ENCODE measurements at regions of chr3 and their contacts with region 1.

Region 1: GRCh38 chr3:108589146-108589997 is at the starts of genes CIP2A and DZIP3:
- DNase-seq: peak; percentile 90
- ATAC-seq: peak; percentile 87
- H3K4me3 Mint-ChIP-seq: peak within 1 kb of the TSS; percentile 82
- H3K27ac Mint-ChIP-seq: peak within 1 kb of the TSS; percentile 97
- H3K4me1 Mint-ChIP-seq: peaks cover 33% of the 10 kb centered on the region
- H3K27me3 Mint-ChIP-seq: no peaks in the 10 kb centered on the region
- total RNA-seq, gene CIP2A: 47.8 to 58.5 TPM
- total RNA-seq, gene DZIP3: 11.9 to 12.9 TPM

Region 2: GRCh38 chr3:107953722-107954121 is 635.6 kb before region 1 on chr3:
- CTCF ChIA-PET with region 1: no interaction called
- POLR2A ChIA-PET with region 1: no interaction called
- intact Hi-C with region 1: no loop called
- DNase-seq: no peak
- ATAC-seq: no peak
- H3K4me3 Mint-ChIP-seq: no peak overlapping the region
- H3K27ac Mint-ChIP-seq: no peak overlapping the region
- H3K4me1 Mint-ChIP-seq: peaks cover 33% of the 10 kb centered on the region
- H3K27me3 Mint-ChIP-seq: no peaks in the 10 kb centered on the region

Region 3: GRCh38 chr3:108124337-108125152 is 464.8 kb before region 1 on chr3:
- CTCF ChIA-PET with region 1: no interaction called
- POLR2A ChIA-PET with region 1: no interaction called
- intact Hi-C with region 1: loop called in 1 of 2 experiments (anchors 2 kb)
- DNase-seq: peak; percentile 82
- ATAC-seq: peak; percentile 70
- H3K4me3 Mint-ChIP-seq: peak overlapping the region; percentile 93
- H3K27ac Mint-ChIP-seq: peak overlapping the region; percentile 96
- H3K4me1 Mint-ChIP-seq: peaks cover 62% of the 10 kb centered on the region
- H3K27me3 Mint-ChIP-seq: no peaks in the 10 kb centered on the region

Region 4: GRCh38 chr3:108552267-108553159 is 36.9 kb before region 1 on chr3:
- CTCF ChIA-PET with region 1: interaction called, 13 read pairs
- POLR2A ChIA-PET with region 1: no interaction called
- intact Hi-C with region 1: no loop called
- DNase-seq: no peak
- ATAC-seq: no peak
- H3K4me3 Mint-ChIP-seq: no peak overlapping the region
- H3K27ac Mint-ChIP-seq: no peak overlapping the region
- H3K4me1 Mint-ChIP-seq: peaks cover 4% of the 10 kb centered on the region
- H3K27me3 Mint-ChIP-seq: no peaks in the 10 kb centered on the region

Region 5: GRCh38 chr3:108818404-108818803 is 229.0 kb after region 1 on chr3:
- CTCF ChIA-PET with region 1: interaction called, 3 read pairs
- POLR2A ChIA-PET with region 1: no interaction called
- intact Hi-C with region 1: loop called (anchors 5 kb)
- DNase-seq: peak; percentile 76
- ATAC-seq: peak; percentile 90
- H3K4me3 Mint-ChIP-seq: peak overlapping the region; percentile 18
- H3K27ac Mint-ChIP-seq: peak overlapping the region; percentile 22
- H3K4me1 Mint-ChIP-seq: peaks cover 36% of the 10 kb centered on the region
- H3K27me3 Mint-ChIP-seq: no peaks in the 10 kb centered on the region